Heart left ventricle (tissue), 16 donors: ENCODE measurements at regions of chr16 and their contacts with region 1.

Region 1: DNA sequence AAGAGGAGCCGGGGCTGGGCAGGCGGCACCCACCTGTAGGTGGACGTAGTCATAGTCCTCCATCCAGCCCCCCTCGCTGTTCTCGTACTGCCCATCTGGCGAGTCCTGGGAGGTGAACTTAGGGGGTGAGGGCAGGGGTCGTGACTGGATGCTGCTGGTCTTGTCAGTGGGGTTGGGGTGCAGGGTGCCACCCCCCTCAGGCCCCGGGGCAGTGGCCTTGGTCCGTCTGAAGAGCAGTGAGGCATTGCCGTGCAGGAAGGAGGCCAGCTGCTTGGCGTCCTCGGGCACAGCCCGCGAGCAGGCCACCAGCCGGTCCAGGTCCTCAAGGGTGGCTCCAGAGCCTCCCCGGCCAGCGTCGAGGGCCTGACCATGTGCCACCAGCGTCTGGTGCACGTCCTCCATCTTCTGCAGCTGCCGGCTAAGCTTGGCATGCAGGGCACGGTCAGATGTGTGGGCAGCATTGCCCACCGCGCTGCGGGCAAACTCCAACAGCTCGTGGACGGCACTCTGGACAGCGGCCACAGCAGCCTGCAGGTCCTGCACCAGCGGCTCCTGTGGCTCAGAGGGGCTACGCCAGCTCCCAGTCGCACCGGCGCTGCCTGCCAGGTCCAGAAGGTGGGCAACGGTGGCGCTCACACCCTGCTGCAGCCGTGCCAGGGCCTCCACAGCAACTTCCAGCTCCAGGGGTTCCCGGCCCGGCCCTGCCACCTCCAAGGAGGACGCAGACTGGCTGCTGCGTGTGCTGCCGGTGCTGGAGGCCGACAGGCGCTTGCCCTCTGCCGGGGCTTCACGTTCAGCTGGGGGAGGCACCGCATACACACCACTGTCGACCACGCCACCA is 16.3 kb downstream of the CTRB1 start:
- DNase-seq: peak in 2 of 5 donors; percentile 11 to 27
- ATAC-seq: no peak
- H3K4me3 ChIP-seq: no peak overlapping the region
- H3K27ac ChIP-seq: peak overlapping the region in 8 of 12 donors; percentile 17 to 63 (median 56)
- H3K4me1 ChIP-seq: peaks cover 3 to 61% (median 47%) of the 10 kb centered on the region in 12 donors
- H3K27me3 ChIP-seq: peaks cover 0 to 19% (median 0%) of the 10 kb centered on the region in 9 donors
- CTCF ChIP-seq: peak in 1 of 12 donors; percentile 2
- POLR2A ChIP-seq: no peak

Region 2: DNA sequence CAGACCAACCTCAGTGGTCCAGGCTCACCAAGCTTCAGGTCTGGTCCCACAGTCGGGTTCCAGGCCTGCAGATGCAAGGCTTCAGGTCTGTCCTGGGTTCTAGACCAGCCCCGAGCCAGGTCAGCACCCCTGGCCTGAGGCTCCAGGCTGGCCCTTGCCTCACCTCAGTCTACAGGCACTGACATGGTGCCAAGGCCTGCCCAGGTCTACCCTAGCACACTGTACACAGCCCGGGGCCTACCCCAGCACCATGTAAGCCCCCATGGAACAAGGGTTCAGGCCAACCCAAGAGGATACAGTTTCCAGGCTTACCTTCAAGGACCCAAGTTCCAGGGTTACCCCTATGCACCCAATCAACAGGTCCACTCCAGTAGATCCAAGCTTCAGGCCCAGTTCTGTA is 60.0 kb before region 1 on chr16:
- intact Hi-C with region 1: no loop called
- DNase-seq: no peak
- ATAC-seq: no peak
- H3K4me3 ChIP-seq: no peak overlapping the region
- H3K27ac ChIP-seq: no peak overlapping the region
- H3K4me1 ChIP-seq: no peaks in the 10 kb centered on the region
- H3K27me3 ChIP-seq: no peaks in the 10 kb centered on the region
- CTCF ChIP-seq: no peak
- POLR2A ChIP-seq: no peak

Region 3: DNA sequence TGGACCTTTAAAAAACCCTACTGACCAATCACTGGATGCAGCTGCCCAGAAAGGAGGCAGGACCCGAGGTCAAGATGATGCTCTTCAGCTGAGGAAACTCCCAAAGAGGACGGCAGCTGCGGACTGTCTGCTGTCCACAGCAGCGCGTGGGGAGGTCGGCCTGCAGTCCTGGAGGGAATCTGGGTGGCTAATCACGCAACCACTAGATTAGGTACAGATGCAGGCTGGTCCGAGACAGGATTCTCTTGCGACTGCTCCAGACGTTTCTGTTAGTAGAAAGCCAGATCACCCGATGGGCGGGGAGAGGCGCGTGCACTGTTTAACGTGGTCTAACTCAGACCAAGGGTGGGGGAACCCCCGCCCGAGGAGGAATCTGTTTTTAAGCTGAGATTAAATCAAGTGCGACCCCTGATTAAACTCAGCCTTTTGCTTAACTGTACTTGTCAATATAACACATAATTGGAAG is 36.9 kb before region 1 on chr16:
- intact Hi-C with region 1: loop called in 1 of 10 experiments (anchors 5 kb)
- DNase-seq: peak in 1 of 5 donors; percentile 69
- ATAC-seq: peak in 2 of 4 donors; percentile 6 to 61
- H3K4me3 ChIP-seq: no peak overlapping the region
- H3K27ac ChIP-seq: no peak overlapping the region
- H3K4me1 ChIP-seq: peaks cover 0 to 23% (median 0%) of the 10 kb centered on the region in 12 donors
- H3K27me3 ChIP-seq: peaks cover 0 to 20% (median 9%) of the 10 kb centered on the region in 9 donors
- CTCF ChIP-seq: no peak
- POLR2A ChIP-seq: no peak

Region 4: GRCh38 chr16:75265845-75266701 is 31.0 kb after region 1 on chr16:
- intact Hi-C with region 1: loop called in 1 of 10 experiments (anchors 5 kb)
- DNase-seq: peak; percentile 73 to 87 (median 78)
- ATAC-seq: peak; percentile 14 to 58 (median 44)
- H3K4me3 ChIP-seq: peak overlapping the region; percentile 70 to 100 (median 94)
- H3K27ac ChIP-seq: peak overlapping the region; percentile 84 to 99 (median 96)
- H3K4me1 ChIP-seq: peaks cover 27 to 66% (median 52%) of the 10 kb centered on the region in 12 donors
- H3K27me3 ChIP-seq: peaks cover 0 to 50% (median 0%) of the 10 kb centered on the region in 9 donors
- CTCF ChIP-seq: no peak
- POLR2A ChIP-seq: peak in 1 of 2 donors; percentile 65

Region 5: DNA sequence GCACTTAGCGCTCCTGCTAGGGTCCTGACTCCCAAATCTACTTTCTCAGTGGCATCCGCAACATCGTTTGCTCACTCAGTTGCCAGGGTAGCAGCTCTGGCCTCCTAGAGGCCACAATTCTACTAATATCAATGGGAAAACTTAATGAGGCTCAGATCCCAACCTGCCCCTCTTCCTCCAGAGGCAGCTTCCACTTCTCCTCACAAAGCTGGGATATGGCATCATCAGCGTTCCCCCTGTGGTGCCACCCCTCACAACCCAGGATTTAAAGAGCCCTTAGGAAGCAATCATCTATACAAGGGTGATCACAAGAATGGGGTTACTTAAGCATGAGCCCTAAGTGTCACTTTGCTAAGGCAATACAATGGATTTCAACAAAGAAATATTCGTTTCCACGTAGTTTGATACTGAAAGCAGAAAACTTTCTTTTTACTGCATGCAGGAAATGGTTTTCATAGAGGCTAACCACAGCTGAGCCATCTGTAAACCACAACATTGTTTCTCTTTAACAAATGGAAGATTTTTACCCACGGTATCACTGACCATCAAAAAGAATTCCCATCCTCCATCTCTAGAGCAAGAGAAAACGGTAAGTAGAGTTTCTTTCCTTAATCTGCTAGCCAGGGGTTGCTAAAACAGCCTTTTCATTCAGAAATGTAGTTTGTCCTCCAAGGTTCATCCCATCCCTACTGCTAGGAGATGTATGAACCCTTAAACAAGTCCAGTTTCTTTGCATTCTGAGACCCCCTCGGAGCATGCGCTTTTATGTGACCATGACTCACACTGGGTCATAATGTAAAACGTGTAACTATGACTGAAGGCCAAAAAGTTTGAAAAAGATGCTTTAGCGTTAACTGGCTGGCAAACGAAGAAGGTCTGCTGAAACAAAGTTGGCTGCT is 84.7 kb after region 1 on chr16:
- intact Hi-C with region 1: loop called in 1 of 10 experiments (anchors 5 kb)
- DNase-seq: no peak
- ATAC-seq: no peak
- H3K4me3 ChIP-seq: no peak overlapping the region
- H3K27ac ChIP-seq: peak overlapping the region in 6 of 12 donors; percentile 13 to 75 (median 30)
- H3K4me1 ChIP-seq: peaks cover 0 to 35% (median 17%) of the 10 kb centered on the region in 12 donors
- H3K27me3 ChIP-seq: peaks cover 0 to 35% (median 0%) of the 10 kb centered on the region in 9 donors
- CTCF ChIP-seq: no peak
- POLR2A ChIP-seq: no peak

Region 6: GRCh38 chr16:75379911-75380847 is 145.1 kb after region 1 on chr16:
- intact Hi-C with region 1: loop called in 7 of 10 experiments (anchors 1 to 2 kb)
- DNase-seq: no peak
- ATAC-seq: peak in 1 of 4 donors; percentile 45
- H3K4me3 ChIP-seq: no peak overlapping the region
- H3K27ac ChIP-seq: peak overlapping the region in 3 of 12 donors; percentile 14 to 35 (median 17)
- H3K4me1 ChIP-seq: peaks cover 0 to 49% (median 6%) of the 10 kb centered on the region in 12 donors
- H3K27me3 ChIP-seq: peaks cover 0 to 57% (median 0%) of the 10 kb centered on the region in 9 donors
- CTCF ChIP-seq: no peak
- POLR2A ChIP-seq: no peak

Region 7: DNA sequence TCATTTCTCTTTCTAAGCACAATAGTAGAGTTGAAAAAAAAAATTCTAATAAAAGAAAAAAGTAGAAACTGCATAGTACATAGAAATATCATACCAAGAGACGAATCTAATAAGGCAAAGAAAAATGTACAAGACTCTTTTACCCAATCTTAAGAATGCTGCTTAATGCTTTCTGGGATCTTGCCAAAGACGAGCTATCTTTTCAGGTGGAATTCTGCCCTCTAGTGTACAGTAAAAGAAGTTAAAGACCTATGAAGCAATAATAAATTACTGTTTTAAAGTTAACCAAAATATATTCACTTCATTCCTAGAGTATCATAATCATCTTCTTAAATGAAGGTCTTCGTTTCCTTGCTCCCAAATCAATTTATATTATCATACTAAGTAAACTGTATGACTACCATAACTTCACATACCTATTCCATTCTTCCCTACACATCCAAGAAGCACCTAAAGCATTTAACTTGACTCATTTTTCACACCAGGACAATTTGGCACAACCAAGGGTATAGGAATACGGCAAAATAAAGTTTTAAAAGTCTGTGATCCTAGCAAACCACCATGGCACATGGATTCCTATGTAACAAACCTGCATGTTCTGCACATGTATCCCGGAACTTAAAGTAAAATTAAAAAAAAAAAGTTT is 150.6 kb after region 1 on chr16:
- intact Hi-C with region 1: loop called (anchors 1 to 2 kb)
- DNase-seq: peak in 1 of 5 donors; percentile 29
- ATAC-seq: no peak
- H3K4me3 ChIP-seq: no peak overlapping the region
- H3K27ac ChIP-seq: no peak overlapping the region
- H3K4me1 ChIP-seq: peaks cover 0 to 44% (median 18%) of the 10 kb centered on the region in 12 donors
- H3K27me3 ChIP-seq: peaks cover 0 to 18% (median 0%) of the 10 kb centered on the region in 9 donors
- CTCF ChIP-seq: peak; percentile 63 to 85 (median 74)
- POLR2A ChIP-seq: no peak

Region 8: DNA sequence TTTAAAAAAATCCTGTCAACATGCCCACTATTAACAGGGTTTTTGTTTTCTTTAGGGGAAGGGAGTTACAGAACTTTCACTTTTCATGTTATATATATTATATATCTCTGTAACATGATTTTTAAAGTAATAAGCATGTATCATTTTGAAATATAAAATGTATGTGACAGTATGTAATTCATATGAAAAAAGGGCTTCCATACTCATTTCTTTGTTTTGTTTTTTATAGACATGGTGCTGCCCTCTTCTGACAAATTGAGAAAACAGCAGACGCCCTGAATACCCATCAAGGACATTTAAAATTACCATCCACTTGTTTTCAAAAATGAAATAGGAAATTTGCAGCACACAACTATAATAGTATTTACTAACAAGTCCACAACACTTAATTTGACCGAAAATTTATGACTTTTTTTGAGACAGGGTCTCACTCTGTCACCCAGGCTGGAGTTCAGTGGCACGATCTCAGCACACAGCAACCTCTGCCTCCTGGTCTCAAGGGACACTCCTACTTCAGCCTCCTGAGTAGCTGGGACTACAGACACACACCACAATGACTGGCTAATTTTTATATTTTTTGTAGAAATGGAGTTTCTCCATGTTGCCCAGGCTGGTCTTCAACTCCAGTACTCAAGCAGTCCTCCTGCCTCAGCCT is 167.9 kb after region 1 on chr16:
- intact Hi-C with region 1: loop called in 4 of 10 experiments (anchors 5 kb)
- DNase-seq: no peak
- ATAC-seq: peak in 3 of 4 donors; percentile 23 to 50 (median 50)
- H3K4me3 ChIP-seq: no peak overlapping the region
- H3K27ac ChIP-seq: peak overlapping the region; percentile 1 to 83 (median 66)
- H3K4me1 ChIP-seq: peaks cover 0 to 29% (median 20%) of the 10 kb centered on the region in 12 donors
- H3K27me3 ChIP-seq: no peaks in the 10 kb centered on the region
- CTCF ChIP-seq: peak; percentile 53 to 81 (median 66)
- POLR2A ChIP-seq: no peak